Aorta (tissue), 5 donors: ENCODE measurements at regions of chr14 and their contacts with region 1.

Region 1: DNA sequence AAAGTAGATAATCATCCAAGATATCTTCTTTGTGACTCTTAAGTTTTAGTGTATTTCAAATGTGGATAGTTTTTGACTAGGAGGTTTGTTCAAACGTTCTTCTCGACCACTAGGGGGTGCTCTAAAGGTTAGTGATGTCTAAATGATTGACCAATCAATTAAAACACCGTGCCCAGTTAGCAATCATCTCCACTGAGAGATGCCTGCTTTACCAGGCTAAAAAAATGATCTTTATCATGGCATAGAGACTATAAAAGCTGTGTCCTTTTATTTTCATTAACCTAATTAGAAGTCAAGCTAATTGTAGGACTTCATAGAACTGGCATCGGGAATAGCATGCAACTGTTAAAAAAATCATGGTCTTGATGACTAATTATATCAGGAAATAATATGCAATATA is 153.9 kb downstream of the PRKCH start:
- DNase-seq: no peak
- ATAC-seq: no peak
- H3K4me3 ChIP-seq: no peak overlapping the region
- H3K27ac ChIP-seq: no peak overlapping the region
- H3K4me1 ChIP-seq: peaks cover 0 to 3% of the 10 kb centered on the region in 2 donors
- H3K27me3 ChIP-seq: no peaks in the 10 kb centered on the region

Region 2: DNA sequence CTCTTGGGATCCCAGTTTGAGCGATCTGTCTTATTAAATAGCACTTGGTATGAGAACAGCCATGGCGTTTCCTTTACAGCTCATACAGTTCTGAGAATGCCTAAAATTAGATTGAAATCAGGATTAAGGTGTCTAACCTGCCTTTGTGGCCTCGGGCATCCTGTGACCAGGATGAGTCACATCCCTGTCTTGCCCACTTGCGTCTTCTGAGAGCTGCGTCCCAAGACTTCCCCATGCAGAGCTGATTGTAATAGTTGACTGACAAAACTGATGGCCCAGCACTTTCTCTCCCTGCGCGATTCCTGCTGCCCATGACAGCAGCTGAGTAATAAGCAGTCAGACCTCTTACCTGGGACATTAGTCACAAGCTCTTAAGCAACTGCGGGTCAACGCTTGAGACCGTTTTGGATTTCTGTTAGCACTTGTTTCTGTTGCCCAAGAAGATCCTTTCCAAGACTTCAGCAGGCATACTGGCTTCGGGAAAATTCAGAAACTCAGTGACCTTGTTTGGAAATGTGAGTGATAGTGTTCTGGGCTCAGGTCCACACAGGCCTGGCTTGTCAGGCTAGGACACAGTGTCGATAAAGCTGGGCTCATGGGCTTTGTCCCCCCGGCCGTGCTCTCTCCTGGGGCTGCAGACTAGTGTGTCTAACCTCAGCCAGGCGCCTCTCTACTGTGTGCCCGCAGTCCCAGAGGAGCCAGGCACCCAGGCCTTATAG is 50.1 kb after region 1 on chr14:
- intact Hi-C with region 1: loop called in 1 of 2 experiments (anchors 5 kb)
- DNase-seq: peak; percentile 84 to 90
- ATAC-seq: peak; percentile 73
- H3K4me3 ChIP-seq: no peak overlapping the region
- H3K27ac ChIP-seq: peak overlapping the region; percentile 38 to 62
- H3K4me1 ChIP-seq: peaks cover 0 to 5% of the 10 kb centered on the region in 2 donors
- H3K27me3 ChIP-seq: no peaks in the 10 kb centered on the region

Region 3: GRCh38 chr14:61561657-61562276 is 86.5 kb after region 1 on chr14:
- intact Hi-C with region 1: loop called in 1 of 2 experiments (anchors 5 kb)
- DNase-seq: peak; percentile 89 to 91
- ATAC-seq: peak; percentile 77
- H3K4me3 ChIP-seq: no peak overlapping the region
- H3K27ac ChIP-seq: peak overlapping the region in 1 of 2 donors; percentile 61
- H3K4me1 ChIP-seq: peaks cover 0 to 2% of the 10 kb centered on the region in 2 donors
- H3K27me3 ChIP-seq: no peaks in the 10 kb centered on the region

Region 4: GRCh38 chr14:61694830-61695694 is 219.7 kb after region 1 on chr14 and contains the start of gene HIF1A:
- intact Hi-C with region 1: loop called (anchors 5 to 10 kb)
- DNase-seq: peak; percentile 98 to 99
- ATAC-seq: peak; percentile 98
- H3K4me3 ChIP-seq: peak within 1 kb of the TSS; percentile 82 to 84
- H3K27ac ChIP-seq: peak within 1 kb of the TSS in 1 of 2 donors; percentile 95
- H3K4me1 ChIP-seq: peaks cover 0 to 8% of the 10 kb centered on the region in 2 donors
- H3K27me3 ChIP-seq: peaks cover 0 to 2% of the 10 kb centered on the region in 2 donors
- total RNA-seq, gene HIF1A: 164 to 173 TPM